GM10248 (cell line): ENCODE measurements at regions of chr10 and their contacts with region 1.

Region 1: DNA sequence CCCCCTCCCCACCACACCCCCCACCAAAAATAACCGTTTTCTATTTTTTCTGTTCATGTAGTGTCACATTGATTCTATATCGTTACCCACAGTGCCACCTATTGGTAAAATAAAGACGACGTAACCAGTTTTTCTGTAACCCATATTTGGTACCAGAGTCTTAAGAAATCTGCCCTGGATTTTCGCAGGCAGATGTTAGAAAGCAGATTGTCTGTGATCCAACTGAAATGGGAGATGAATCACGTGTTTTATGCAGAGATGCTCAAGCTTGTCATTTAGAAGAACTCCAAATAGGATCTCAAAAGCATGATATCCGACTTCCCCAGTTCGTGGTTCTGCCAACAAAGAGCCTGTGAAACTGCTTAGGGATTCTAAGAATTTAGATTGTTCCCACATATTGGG is 261.1 kb upstream of the CSTF2T start:
- DNase-seq: peak; percentile 16
- CTCF ChIP-seq: peak; percentile 51

Region 2: GRCh38 chr10:51972733-51973346 is 12.3 kb after region 1 on chr10:
- CTCF ChIA-PET with region 1: interaction called, 15 read pairs
- POLR2A ChIA-PET with region 1: no interaction called
- DNase-seq: no peak
- CTCF ChIP-seq: no peak